ENCODE measurements at regions of chr5 and their contacts with region 1.

Region 1: DNA sequence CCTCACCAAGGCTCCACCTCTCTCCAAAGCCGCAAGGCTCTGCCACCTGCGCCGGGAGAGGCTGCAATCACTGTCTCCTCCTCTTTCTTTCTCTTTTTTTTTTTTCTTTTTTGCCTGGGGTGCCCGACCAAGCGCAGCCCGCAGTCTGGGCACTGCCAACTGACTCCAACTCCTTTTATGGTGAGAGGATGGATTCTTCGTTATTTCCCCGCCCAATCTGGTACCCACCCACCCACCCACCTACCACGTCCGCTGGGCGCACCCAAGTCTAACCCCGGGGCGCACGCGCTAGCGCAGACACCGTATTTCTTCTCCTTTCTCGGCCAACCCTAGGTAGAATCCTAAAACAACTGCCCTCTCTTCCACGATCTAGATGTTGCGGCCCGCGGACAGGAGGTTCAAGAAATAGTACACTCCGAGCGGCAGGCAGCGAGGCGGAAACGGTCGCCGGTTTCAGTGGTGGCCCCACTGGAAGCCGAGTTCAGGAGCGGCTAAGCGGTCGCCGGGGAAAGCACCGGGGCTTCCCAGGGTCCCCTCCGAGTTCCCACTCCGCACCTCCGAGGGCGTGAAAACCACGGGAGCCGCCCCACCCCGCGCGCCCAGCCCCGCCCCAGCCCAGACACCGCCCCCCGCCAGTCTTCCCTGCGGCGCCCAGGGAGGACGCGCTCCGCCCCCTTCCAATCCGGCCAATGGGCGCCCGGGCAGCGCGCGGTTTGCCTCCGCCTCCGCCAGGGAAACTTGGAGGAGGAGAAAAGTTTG is 381 bp upstream of the PTGER4 start:
- DNase-seq: peak; percentile 97 to 100
- H3K4me3 ChIP-seq: peak overlapping the region; percentile 82
- H3K27ac ChIP-seq: peak overlapping the region; percentile 93
- H3K4me1 ChIP-seq: peaks cover 54% of the 10 kb centered on the region
- H3K27me3 ChIP-seq: no peaks in the 10 kb centered on the region
- CTCF ChIP-seq: no peak

Region 2: DNA sequence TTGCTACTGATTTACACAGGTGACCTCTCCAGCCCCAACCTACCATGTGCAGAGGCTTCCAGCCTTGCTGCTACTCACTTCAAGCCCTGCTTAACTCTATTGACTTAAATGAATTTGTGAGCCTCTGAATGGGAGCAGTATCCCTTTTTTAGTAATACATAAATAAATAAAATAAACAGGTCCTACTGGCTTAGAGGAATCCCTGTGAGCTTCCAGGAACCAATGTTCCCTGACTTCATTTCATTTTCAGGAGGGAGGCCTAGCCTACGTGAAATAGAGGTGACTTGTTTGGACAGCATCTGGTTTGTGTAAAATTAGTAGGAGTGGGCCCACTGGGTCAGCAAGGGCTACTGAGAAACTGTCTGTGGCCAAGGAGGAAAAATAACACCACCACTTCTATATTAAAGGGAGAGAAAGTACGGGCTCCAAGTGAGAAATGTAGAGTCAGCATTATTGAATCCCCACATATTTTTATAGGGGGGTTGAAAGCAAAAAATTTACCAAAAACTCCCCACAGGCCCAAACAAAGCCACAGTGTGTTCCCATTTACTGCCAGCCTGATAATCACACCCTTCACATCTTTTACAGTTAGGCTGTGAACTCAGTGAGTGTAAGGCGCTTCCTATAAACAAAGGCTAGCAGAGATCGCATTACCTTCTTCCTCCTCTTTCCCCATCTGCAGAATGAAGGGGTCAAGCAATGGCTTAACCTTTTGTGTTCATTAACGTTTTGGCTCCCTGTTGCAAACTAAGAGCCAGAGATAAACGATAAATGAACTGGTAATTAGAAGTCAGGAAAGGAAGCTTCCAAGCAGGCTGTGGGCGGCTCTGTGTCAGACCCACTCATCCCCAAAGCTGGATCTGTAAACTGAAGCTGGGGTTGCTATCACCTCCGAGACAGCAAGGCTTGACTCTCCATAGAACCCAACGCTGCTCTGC is 1984.0 kb before region 1 on chr5:
- CTCF ChIA-PET with region 1: no interaction called
- POLR2A ChIA-PET with region 1: interaction called, 11 read pairs
- intact Hi-C with region 1: no loop called
- DNase-seq: no peak
- H3K4me3 ChIP-seq: no peak overlapping the region
- H3K27ac ChIP-seq: no peak overlapping the region
- H3K4me1 ChIP-seq: no peaks in the 10 kb centered on the region
- H3K27me3 ChIP-seq: no peaks in the 10 kb centered on the region; the same call in 1 of the 2 replicates
- CTCF ChIP-seq: no peak

Region 3: DNA sequence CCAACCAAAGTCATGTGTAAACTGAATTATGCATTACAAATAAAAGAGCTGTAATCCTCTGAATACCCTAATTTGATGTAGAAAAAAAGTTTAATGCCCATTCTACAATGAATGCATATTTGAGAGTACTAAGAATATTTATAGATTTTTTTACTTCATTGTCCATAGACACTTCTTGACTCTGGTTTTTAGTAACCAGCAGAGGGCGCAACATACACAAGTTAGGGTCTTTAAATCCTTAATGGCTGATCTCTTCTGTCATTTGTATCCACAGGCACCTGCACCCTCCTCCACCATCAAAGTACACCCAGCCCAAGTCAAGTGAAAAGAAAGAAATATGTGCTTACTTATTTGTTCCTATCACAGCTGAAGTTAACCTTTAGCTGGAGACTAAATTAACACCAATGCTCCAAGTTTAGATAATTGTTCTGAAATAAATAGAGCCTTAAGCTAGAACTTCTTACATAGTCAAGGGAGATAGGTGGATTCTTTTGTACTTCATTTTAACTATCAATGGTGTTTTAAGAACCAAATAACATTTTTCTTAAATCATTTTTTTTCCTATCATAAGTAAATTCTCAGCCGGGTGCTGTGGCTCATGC is 730.4 kb before region 1 on chr5:
- CTCF ChIA-PET with region 1: interaction called, 3 read pairs
- POLR2A ChIA-PET with region 1: no interaction called
- intact Hi-C with region 1: loop called (anchors 2 kb)
- DNase-seq: peak; percentile 56 to 66
- H3K4me3 ChIP-seq: no peak overlapping the region
- H3K27ac ChIP-seq: no peak overlapping the region
- H3K4me1 ChIP-seq: no peaks in the 10 kb centered on the region
- H3K27me3 ChIP-seq: no peaks in the 10 kb centered on the region
- CTCF ChIP-seq: peak; percentile 96

Region 4: GRCh38 chr5:40437452-40437861 is 241.9 kb before region 1 on chr5:
- CTCF ChIA-PET with region 1: no interaction called
- POLR2A ChIA-PET with region 1: interaction called, 6 read pairs
- intact Hi-C with region 1: loop called (anchors 2 kb)
- DNase-seq: peak; percentile 77 to 99
- H3K4me3 ChIP-seq: no peak overlapping the region
- H3K27ac ChIP-seq: peak overlapping the region; percentile 74
- H3K4me1 ChIP-seq: peaks cover 22% of the 10 kb centered on the region
- H3K27me3 ChIP-seq: no peaks in the 10 kb centered on the region
- CTCF ChIP-seq: no peak

Region 5: GRCh38 chr5:40551496-40552491 is 127.5 kb before region 1 on chr5:
- CTCF ChIA-PET with region 1: no interaction called
- POLR2A ChIA-PET with region 1: interaction called, 29 read pairs
- intact Hi-C with region 1: loop called (anchors 1 kb)
- DNase-seq: peak; percentile 81 to 98
- H3K4me3 ChIP-seq: peak overlapping the region; percentile 15; the same call in 1 of the 2 replicates
- H3K27ac ChIP-seq: peak overlapping the region; percentile 77
- H3K4me1 ChIP-seq: peaks cover 27% of the 10 kb centered on the region
- H3K27me3 ChIP-seq: no peaks in the 10 kb centered on the region
- CTCF ChIP-seq: no peak

Region 6: DNA sequence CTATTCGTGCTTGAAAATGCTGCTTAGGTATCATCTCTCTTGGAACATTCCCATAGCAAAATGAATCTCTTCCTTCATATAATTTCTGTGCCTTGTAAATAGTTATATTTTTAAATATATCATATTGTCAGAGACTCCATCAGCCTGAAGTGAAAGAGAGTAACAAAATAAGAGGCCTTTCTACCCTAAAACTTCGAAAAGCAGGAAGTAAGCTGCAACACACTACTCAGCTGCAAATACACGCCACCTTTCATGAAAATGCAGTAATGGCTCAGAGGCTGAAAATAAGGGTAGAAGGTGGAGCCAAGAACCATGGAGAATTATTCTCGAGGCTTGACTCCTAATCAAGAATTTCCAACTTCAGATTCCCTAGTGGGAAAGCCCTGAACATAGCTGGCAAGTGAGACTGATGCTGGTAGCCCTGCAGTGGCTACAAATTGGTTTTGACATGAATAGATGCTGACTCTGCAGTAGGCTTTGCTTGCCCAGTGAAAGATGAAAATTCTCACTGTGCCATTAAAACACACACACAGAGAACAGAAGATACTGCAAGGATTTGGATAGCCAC is 29.8 kb before region 1 on chr5:
- CTCF ChIA-PET with region 1: no interaction called
- POLR2A ChIA-PET with region 1: interaction called, 7 read pairs
- intact Hi-C with region 1: loop called (anchors 5 kb)
- DNase-seq: no peak
- H3K4me3 ChIP-seq: no peak overlapping the region
- H3K27ac ChIP-seq: no peak overlapping the region
- H3K4me1 ChIP-seq: no peaks in the 10 kb centered on the region
- H3K27me3 ChIP-seq: no peaks in the 10 kb centered on the region
- CTCF ChIP-seq: no peak

Region 7: DNA sequence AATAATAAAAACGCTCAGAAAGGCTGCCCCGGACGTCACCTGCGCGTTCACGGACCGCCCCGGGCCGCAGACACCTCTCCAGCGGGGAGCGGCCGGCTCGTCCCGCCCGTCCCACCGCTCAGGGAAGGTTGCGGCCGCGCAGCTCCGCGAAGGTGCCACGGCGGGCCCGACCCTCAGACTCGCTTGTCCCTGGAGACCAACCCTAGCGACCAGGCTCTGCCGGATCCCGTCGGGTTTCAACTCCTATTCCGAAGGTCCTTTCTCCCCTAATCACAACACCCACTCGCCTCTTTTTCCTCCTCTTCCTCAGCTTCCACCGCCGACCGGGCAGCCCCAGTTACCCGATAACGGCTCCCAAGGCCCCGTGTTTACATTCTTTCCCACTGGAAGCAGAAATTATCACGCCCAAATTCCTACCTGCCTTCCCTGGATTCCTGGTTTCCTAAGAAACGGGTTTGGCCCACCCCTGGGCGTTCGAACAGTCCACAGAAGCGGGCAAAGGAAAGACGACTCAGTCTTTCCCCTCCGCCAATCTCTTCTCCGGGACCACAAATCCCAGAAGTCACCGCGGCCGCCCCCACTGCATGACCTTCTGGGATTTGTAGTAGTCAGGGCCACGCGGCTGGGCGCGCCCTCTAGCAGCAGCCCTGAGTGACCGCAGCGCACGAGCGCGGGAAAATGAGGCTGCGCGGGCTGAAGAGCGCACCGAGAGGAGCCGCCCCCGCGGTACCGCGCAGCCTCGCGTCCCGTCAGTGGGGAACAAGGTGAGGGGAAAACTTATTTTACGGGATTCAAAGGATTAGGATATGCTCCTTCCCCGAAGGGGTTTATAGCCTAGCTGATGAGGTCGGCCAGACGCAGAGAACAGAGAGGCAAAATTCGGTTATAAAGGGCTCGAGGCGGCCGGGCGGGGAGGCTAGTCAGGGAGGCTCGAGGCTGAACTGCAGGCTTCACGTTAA is 76.4 kb after region 1 on chr5 and contains the start of gene TTC33:
- CTCF ChIA-PET with region 1: no interaction called
- POLR2A ChIA-PET with region 1: no interaction called
- intact Hi-C with region 1: no loop called
- DNase-seq: peak; percentile 90 to 99
- H3K4me3 ChIP-seq: peak within 1 kb of the TSS; percentile 79
- H3K27ac ChIP-seq: peak within 1 kb of the TSS; percentile 36
- H3K4me1 ChIP-seq: peaks cover 11% of the 10 kb centered on the region
- H3K27me3 ChIP-seq: no peaks in the 10 kb centered on the region
- CTCF ChIP-seq: peak; percentile 76
- total RNA-seq, gene TTC33: 29.4 and 30.2 TPM in 2 replicates

Region 8: DNA sequence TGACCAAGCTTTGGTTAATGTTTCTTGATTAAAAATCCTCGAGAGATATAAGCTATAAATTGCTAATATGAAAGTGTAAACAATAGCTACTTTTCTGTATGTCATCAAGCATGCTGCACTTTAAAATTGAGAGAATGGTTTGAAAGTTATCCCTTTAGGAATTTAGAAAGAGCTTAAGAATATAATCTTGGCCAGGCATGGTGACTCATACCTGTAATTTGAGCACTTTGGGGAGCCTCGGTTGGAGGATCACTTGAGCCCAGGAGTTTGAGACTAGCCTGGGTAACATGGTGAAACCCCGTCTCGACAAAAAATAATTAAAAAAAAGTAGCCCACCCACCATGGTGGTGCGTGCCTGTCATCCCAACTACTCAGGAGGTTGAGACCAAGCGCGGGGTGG is 404.0 kb after region 1 on chr5:
- CTCF ChIA-PET with region 1: no interaction called
- POLR2A ChIA-PET with region 1: no interaction called
- intact Hi-C with region 1: no loop called
- DNase-seq: no peak
- H3K4me3 ChIP-seq: no peak overlapping the region
- H3K27ac ChIP-seq: no peak overlapping the region
- H3K4me1 ChIP-seq: no peaks in the 10 kb centered on the region
- H3K27me3 ChIP-seq: no peaks in the 10 kb centered on the region
- CTCF ChIP-seq: no peak

Measured in PC-9 (cell line).